T-cell (primary cell): ENCODE measurements at regions of chr2 and their contacts with region 1.

Region 1: GRCh38 chr2:65576861-65577601 is 144.6 kb upstream of the SPRED2 start:
- DNase-seq: no peak
- ATAC-seq: no peak
- H3K4me3 ChIP-seq: no peak overlapping the region
- H3K4me3 Mint-ChIP-seq: no peak overlapping the region
- H3K27ac ChIP-seq: no peak overlapping the region
- H3K27ac Mint-ChIP-seq: no peak overlapping the region
- H3K4me1 ChIP-seq: no peaks in the 10 kb centered on the region
- H3K4me1 Mint-ChIP-seq: peaks cover 2 to 6% (median 3%) of the 10 kb centered on the region in 3 donors
- H3K27me3 ChIP-seq: peaks cover 0 to 15% of the 10 kb centered on the region in 2 experiments
- H3K27me3 Mint-ChIP-seq: peaks cover 8 to 9% of the 10 kb centered on the region in 2 donors

Region 2: DNA sequence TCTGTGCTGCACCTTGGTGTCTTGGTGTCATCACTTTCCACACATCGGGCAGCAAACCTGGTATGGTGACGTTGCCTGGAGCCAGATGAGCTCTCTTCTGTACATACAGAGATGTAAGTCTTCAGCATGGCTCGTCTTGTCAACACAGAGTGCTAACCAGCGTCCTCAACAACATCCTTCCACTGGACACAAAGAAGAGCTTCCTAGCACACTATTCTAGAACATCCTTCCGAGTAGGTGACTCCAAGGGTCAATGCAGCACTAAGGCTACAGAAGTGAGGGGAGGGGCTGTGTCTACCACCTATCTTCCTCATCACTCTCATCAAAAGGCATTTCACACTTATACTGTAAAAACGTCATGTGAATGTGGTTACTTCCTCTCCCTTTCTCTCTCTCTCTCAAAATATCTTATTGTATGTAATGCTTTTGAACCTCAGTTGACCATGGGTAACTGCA is 696.0 kb before region 1 on chr2:
- CTCF ChIA-PET with region 1: interaction called in 1 of 2 experiments, 11 read pairs
- POLR2A ChIA-PET with region 1: no interaction called
- DNase-seq: peak in 6 of 35 experiments; percentile 15 to 40 (median 30)
- ATAC-seq: peak in 2 of 4 experiments; percentile 37 to 80
- H3K4me3 ChIP-seq: no peak overlapping the region
- H3K4me3 Mint-ChIP-seq: no peak overlapping the region
- H3K27ac ChIP-seq: no peak overlapping the region
- H3K27ac Mint-ChIP-seq: no peak overlapping the region
- H3K4me1 ChIP-seq: no peaks in the 10 kb centered on the region
- H3K4me1 Mint-ChIP-seq: peaks cover 5 to 11% (median 9%) of the 10 kb centered on the region in 3 donors
- H3K27me3 ChIP-seq: peaks cover 0 to 11% of the 10 kb centered on the region in 2 experiments
- H3K27me3 Mint-ChIP-seq: peaks cover 0 to 5% of the 10 kb centered on the region in 2 donors